A549 (cell line): ENCODE measurements at regions of chr15 and their contacts with region 1.

Region 1: DNA sequence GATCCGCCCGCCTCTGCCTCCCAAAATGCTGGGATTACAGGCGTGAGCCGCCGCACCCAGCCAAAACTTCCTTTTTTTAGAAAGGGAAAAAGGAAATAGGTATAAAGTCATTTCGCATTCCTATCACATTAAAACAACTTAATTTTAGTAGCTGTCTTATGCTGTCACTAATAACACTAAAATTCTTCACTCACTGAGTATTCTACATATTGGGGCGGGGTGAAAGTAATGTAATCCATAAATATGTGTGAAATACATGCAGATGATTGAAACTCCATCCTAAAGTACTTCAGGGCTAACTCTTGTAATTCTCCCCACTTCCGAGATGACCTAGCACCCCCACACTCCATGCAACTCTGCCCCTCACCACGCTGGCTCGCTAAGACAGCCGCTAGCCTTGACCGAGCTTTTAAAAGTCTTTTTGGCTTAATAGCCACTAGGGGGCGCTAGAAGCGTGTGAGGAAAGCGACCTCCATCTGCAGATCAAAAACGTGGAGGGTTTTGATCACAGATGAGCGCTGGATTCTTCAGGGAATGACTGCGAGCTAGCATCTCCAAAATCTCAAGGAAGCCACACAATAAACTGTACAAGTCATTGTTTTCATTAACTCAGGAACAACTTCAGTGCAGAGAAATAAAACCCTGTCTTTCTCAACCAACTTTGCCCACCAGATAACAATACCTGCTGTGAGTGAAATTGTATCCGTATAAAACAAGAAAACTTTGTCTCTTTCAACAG is 129.3 kb upstream of the IGF1R start:
- DNase-seq: peak; percentile 85 to 86
- ATAC-seq: peak; percentile 89 to 96
- H3K4me3 ChIP-seq: no peak overlapping the region
- H3K27ac ChIP-seq: peak overlapping the region; percentile 3 to 50; a peak in 2 of 6 replicates
- H3K4me1 ChIP-seq: no peaks in the 10 kb centered on the region
- CTCF ChIP-seq: peak; percentile 91
- EP300 ChIP-seq: no peak
- POLR2A ChIP-seq: no peak
- RAD21 ChIP-seq: peak; percentile 91 to 93

Region 2: DNA sequence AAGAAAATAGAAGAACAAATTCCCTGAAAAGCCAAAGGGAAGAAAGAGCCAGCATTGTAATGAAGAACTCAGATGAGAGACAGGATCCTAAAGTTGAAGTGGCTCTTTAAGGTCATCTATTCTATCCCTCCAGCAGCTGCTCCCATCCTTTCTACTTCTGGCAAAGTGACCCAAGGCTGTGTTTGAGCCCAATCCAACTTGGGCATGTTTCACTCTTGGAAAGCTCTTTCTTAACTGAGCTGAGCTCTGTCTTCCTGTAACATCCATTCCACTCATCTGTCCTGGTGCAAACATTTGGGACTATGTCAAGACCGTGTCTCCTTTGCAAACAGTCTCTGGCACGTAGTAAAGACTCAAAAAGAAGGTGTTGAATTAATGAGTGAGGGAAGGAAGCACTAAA is 168.7 kb before region 1 on chr15:
- CTCF ChIA-PET with region 1: no interaction called
- POLR2A ChIA-PET with region 1: no interaction called
- DNase-seq: no peak
- ATAC-seq: no peak
- H3K4me3 ChIP-seq: no peak overlapping the region
- H3K27ac ChIP-seq: no peak overlapping the region
- H3K4me1 ChIP-seq: no peaks in the 10 kb centered on the region
- CTCF ChIP-seq: no peak
- EP300 ChIP-seq: no peak
- POLR2A ChIP-seq: no peak
- RAD21 ChIP-seq: no peak

Region 3: DNA sequence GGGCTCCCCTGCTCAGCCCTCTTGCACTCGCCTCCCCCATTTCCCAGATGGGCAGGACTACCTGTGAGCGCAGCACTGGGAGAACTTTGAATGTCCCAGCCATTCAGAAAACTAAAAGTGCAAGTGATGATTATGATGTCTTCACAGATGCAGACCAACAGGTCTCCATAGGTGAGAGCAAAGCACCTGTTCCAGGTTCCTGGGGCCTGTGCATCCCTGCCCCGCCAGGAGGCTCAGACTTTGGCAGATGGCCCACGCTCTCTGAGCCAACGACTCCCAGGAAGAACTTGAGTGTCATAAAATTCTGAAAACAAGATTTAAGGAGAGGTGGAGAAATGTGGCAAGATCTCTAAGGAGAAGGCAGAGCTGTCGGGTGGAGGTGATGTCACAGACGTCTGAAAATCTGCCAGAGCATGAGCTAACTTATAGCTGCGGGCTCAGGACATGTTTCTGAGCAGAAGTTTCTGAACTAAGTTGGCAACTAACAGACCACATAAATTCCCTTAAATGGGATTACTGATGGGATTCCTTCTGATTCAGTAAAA is 18.6 kb after region 1 on chr15:
- CTCF ChIA-PET with region 1: interaction called, 21 read pairs
- POLR2A ChIA-PET with region 1: no interaction called
- DNase-seq: no peak
- ATAC-seq: no peak
- H3K4me3 ChIP-seq: no peak overlapping the region
- H3K27ac ChIP-seq: no peak overlapping the region
- H3K4me1 ChIP-seq: no peaks in the 10 kb centered on the region
- CTCF ChIP-seq: no peak
- EP300 ChIP-seq: no peak
- POLR2A ChIP-seq: no peak
- RAD21 ChIP-seq: no peak

Region 4: DNA sequence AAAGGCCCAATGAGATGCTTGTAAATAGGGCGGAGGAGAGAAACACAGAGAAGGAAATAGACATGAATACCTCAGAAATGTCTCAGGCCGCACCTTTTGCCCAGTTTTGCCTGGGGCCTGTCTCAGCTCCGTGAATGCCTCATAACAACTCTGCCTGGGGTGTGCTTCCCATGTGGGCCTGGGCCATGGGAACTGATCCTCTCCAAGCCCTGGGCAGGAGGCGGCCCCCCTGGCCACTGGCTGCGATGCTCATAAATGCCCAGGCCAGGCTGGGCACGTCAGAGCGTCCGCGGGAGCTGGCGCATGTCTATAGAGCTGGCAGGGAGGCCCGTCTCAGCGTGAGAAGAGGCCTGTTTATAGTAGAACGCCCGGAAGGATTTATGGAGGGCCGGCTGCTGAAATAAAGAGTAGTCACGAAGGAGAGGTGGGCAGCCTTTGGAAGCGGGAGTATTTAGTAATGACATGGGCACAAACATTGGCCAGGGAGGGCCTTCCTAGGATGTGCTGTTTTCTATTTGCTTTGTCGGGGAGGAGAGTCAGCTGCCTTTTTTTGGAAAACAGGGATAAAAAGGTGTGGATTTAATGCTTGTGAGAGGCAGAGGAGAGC is 43.4 kb after region 1 on chr15:
- CTCF ChIA-PET with region 1: interaction called, 16 read pairs
- POLR2A ChIA-PET with region 1: no interaction called
- DNase-seq: no peak
- ATAC-seq: no peak; a peak in 1 of 6 replicates
- H3K4me3 ChIP-seq: no peak overlapping the region
- H3K27ac ChIP-seq: no peak overlapping the region
- H3K4me1 ChIP-seq: no peaks in the 10 kb centered on the region
- CTCF ChIP-seq: no peak
- EP300 ChIP-seq: no peak
- POLR2A ChIP-seq: no peak
- RAD21 ChIP-seq: no peak

Region 5: GRCh38 chr15:98658831-98659699 is 140.1 kb after region 1 on chr15:
- CTCF ChIA-PET with region 1: interaction called, 52 read pairs
- POLR2A ChIA-PET with region 1: no interaction called
- DNase-seq: peak; percentile 63 to 80
- ATAC-seq: peak; percentile 76 to 85
- H3K4me3 ChIP-seq: no peak overlapping the region
- H3K27ac ChIP-seq: peak overlapping the region in 1 of 2 experiments; percentile 45; a peak in 1 of 6 replicates
- H3K4me1 ChIP-seq: peaks cover 71% of the 10 kb centered on the region
- CTCF ChIP-seq: peak; percentile 94
- EP300 ChIP-seq: no peak
- POLR2A ChIP-seq: no peak
- RAD21 ChIP-seq: peak; percentile 75 to 82

Region 6: GRCh38 chr15:99070208-99070607 is 551.2 kb after region 1 on chr15:
- CTCF ChIA-PET with region 1: interaction called, 90 read pairs
- POLR2A ChIA-PET with region 1: no interaction called
- DNase-seq: no peak
- ATAC-seq: no peak
- H3K4me3 ChIP-seq: no peak overlapping the region
- H3K27ac ChIP-seq: peak overlapping the region in 1 of 2 experiments; percentile 3; a peak in 1 of 6 replicates
- H3K4me1 ChIP-seq: peaks cover 12% of the 10 kb centered on the region; the same call in 2 of the 3 replicates
- CTCF ChIP-seq: no peak
- EP300 ChIP-seq: no peak
- POLR2A ChIP-seq: no peak
- RAD21 ChIP-seq: no peak

Region 7: GRCh38 chr15:99213187-99213811 is 694.3 kb after region 1 on chr15:
- CTCF ChIA-PET with region 1: interaction called, 15 read pairs
- POLR2A ChIA-PET with region 1: no interaction called
- DNase-seq: peak; percentile 72 to 75
- ATAC-seq: peak; percentile 92 to 96; a peak in 5 of 6 replicates
- H3K4me3 ChIP-seq: no peak overlapping the region
- H3K27ac ChIP-seq: no peak overlapping the region
- H3K4me1 ChIP-seq: peaks cover 16% of the 10 kb centered on the region
- CTCF ChIP-seq: peak; percentile 99
- EP300 ChIP-seq: no peak
- POLR2A ChIP-seq: no peak
- RAD21 ChIP-seq: peak; percentile 98